ENCODE measurements at regions of chr13 and their contacts with region 1.

Region 1: DNA sequence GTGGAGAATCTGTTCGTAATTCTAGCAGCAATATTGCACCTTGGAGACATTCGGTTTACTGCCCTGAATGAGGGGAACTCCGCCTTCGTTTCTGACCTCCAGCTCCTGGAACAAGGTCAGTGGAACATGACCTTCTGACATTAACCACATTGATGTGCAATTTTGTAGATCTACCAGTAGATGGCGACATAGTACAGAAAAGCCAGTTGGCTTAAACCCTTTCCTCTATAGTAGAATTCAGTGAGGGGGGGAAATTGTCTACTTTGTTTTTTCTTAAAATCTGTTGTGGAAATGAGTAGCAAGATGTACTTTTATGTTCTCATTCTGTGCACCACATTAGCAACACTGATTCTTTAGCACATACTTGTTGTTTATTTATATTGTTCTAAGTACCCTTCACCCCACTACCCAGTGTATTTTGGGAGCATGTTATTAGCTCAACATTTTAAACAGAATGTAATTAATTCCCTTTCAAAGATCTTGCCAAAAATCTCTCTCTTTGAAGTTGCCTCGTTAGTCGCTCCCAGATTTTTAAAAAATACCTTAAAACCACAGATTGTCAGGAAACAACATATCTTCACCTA is 332.2 kb downstream of the MYO16 start:
- DNase-seq: peak in 1 of 10 donors; percentile 33

Region 2: GRCh38 chr13:109145631-109146030 is 184.0 kb after region 1 on chr13:
- intact Hi-C with region 1: no loop called
- DNase-seq: peak in 1 of 10 donors; percentile 30

Region 3: DNA sequence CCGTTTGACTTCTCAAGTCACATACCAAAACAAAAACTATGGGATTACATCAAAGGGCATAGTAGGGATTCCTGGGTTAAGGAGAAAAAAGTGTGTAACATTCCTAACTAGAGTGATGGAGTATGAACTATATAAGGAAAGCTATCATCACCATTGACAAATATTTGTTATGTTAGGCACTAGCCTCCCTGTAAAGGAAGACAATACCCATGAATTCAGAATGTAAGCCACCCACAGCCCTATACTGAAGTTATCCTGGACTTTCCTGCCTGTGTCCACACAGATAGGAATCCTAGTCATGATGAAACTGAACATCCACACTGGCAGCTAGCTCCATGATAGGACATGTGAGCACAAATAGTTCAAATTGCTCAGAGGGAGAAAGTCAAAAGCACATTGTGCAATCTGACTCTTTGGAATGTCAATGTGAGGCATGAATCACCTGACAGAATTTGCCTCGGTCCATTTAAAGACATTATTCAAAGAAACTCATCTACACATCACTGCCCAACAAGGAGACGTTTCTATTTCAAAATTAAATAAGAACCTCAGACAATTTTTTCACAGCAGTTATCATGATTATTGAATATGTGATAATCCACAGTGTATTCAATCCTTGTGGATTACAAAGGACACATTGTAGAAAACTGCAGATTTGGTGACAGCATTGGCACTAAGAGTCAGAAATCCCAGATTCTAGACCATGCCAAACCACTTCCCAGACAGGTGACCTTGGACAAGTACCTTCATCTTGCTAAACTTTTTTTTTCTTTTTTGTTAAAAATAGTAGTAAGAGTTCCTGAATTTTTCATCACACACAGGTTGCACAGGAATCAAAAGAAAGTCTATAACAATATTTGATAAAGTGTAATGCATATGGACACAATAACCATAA is 295.5 kb after region 1 on chr13:
- intact Hi-C with region 1: no loop called
- DNase-seq: no peak

Region 4: DNA sequence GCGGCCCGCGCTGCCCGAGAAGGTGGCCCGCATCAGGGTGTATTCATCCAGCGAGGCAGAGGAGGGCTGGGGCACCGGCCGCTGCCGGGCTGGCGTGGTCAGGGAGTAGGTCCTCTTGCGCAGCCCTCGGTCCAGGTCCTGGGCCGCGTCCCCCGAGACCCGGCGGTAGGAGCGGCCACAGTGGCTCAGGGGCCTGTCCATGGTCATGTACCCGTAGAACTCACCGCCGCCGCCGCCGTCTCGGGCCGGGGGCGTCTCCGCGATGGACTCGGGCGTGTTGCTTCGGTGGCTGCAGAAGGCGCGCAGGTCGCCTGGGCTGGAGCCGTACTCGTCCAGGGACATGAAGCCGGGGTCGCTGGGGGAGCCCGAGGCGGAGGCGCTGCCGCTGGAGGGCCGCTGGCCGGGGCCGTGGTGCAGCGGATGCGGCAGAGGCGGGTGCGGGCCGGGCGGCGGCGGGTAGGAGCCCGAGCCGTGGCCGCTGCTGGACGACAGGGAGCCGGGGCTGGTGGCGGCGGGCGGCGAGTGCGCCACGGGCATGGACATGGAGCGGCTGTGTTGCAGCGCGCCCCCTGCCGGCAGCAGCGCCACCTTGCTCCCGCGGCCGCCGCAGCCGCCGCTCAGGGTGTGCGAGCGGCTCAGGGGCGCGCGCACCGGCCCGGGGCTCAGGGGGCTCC is 822.7 kb after region 1 on chr13:
- intact Hi-C with region 1: loop called (anchors 2 kb)
- DNase-seq: peak; percentile 70 to 97 (median 77)

Region 5: DNA sequence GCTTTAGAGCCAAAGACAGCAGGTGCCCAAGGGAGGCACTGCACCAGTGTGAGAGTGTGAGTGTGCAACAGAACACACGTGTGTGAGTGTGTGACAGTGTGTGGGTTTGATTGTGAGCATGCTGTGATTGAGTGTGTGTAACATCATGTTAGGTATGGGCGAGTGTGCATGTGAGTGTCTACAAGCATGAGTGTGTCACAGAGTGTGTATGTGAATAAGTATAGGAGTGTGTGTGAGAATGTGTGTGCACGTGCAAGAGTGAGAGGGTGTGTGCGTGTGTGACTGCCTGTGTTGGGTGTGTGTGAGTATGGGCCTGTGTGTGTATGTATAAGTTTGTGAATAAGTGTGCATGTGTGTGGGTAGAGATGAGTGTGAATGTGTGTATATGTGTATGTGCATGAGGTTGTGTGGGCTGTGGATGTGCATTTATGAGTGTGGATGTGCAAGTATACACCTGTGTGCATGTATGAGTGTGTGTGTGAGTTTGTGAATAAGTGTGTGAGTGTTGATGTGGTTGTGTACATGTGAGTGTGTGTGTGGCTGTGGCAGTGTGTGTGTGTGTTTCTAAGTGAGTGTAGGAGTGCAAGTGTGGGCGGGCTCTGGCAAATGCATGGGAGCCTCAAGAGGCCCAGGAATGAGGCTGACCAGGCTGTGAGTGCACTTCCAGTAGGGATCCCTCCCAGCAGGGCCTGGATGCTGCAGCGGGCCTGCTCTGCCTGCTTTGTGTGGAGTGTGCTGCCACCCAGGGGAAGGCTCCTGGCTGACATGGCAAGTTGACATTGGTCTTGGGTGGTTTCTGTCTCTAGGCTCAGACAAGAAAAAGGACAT is 1146.9 kb after region 1 on chr13:
- intact Hi-C with region 1: loop called (anchors 5 kb)
- DNase-seq: peak; percentile 70 to 98 (median 83)

Measured in posterior cingulate gyrus (tissue), 11 donors.